ENCODE measurements at regions of chr12 and their contacts with region 1.

Region 1: GRCh38 chr12:998020-998874 is 7.2 kb downstream of the ERC1 start:
- DNase-seq: no peak
- H3K4me3 Mint-ChIP-seq: no peak overlapping the region
- H3K27ac Mint-ChIP-seq: no peak overlapping the region
- H3K4me1 Mint-ChIP-seq: peaks cover 24% of the 10 kb centered on the region
- H3K27me3 Mint-ChIP-seq: no peaks in the 10 kb centered on the region

Region 2: GRCh38 chr12:905261-906031 is 92.8 kb before region 1 on chr12:
- CTCF ChIA-PET with region 1: no interaction called
- POLR2A ChIA-PET with region 1: no interaction called
- intact Hi-C with region 1: no loop called
- DNase-seq: peak; percentile 15
- H3K4me3 Mint-ChIP-seq: no peak overlapping the region
- H3K27ac Mint-ChIP-seq: peak overlapping the region; percentile 67
- H3K4me1 Mint-ChIP-seq: peaks cover 31% of the 10 kb centered on the region
- H3K27me3 Mint-ChIP-seq: no peaks in the 10 kb centered on the region

Region 3: GRCh38 chr12:1093166-1093751 is 95.0 kb after region 1 on chr12:
- CTCF ChIA-PET with region 1: no interaction called
- POLR2A ChIA-PET with region 1: no interaction called
- intact Hi-C with region 1: loop called (anchors 5 kb)
- DNase-seq: peak; percentile 18
- H3K4me3 Mint-ChIP-seq: no peak overlapping the region
- H3K27ac Mint-ChIP-seq: no peak overlapping the region
- H3K4me1 Mint-ChIP-seq: peaks cover 11% of the 10 kb centered on the region
- H3K27me3 Mint-ChIP-seq: no peaks in the 10 kb centered on the region

Measured in activated CD4-positive, alpha-beta memory T cell treated with anti-CD3 and anti-CD28 coated beads for 36 hours (primary cell).